ENCODE measurements at regions of chr17 and their contacts with region 1.

Region 1: GRCh38 chr17:61444831-61445230 is 7.4 kb upstream of the TBX4 start:
- DNase-seq: no peak
- ATAC-seq: no peak
- H3K4me3 ChIP-seq: no peak overlapping the region
- H3K27ac ChIP-seq: no peak overlapping the region
- H3K4me1 ChIP-seq: no peaks in the 10 kb centered on the region
- H3K27me3 ChIP-seq: peaks cover 0 to 55% (median 13%) of the 10 kb centered on the region in 9 donors
- CTCF ChIP-seq: no peak
- POLR2A ChIP-seq: no peak

Region 2: GRCh38 chr17:61490540-61491412 is 45.9 kb after region 1 on chr17:
- intact Hi-C with region 1: no loop called
- DNase-seq: no peak
- ATAC-seq: no peak
- H3K4me3 ChIP-seq: no peak overlapping the region
- H3K27ac ChIP-seq: no peak overlapping the region
- H3K4me1 ChIP-seq: no peaks in the 10 kb centered on the region
- H3K27me3 ChIP-seq: peaks cover 0 to 7% (median 0%) of the 10 kb centered on the region in 9 donors
- CTCF ChIP-seq: no peak
- POLR2A ChIP-seq: no peak

Region 3: GRCh38 chr17:61504697-61505349 is 60.0 kb after region 1 on chr17:
- intact Hi-C with region 1: loop called in 1 of 10 experiments (anchors 10 kb)
- DNase-seq: no peak
- ATAC-seq: no peak
- H3K4me3 ChIP-seq: no peak overlapping the region
- H3K27ac ChIP-seq: no peak overlapping the region
- H3K4me1 ChIP-seq: no peaks in the 10 kb centered on the region
- H3K27me3 ChIP-seq: peaks cover 0 to 33% (median 0%) of the 10 kb centered on the region in 9 donors
- CTCF ChIP-seq: no peak
- POLR2A ChIP-seq: no peak

Region 4: DNA sequence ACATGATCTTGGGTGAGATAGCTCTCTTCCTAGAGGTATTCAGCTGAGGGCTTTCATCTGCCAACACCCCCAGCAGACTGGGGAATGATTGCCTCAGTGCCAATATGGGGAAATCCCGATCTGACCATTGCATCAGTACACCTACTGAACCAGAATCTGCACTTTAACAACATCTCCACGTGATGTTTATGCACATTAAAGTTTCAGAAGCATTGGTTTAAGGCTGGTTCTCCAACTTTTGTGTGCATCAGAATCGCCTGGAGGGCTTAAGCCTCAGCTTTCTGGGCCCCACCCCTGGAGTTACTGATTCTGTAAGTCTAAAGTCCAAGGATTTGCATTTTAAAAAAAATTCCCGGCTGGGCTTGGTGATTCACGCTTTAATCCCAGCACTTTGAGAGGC is 743.9 kb after region 1 on chr17:
- intact Hi-C with region 1: no loop called
- DNase-seq: no peak
- ATAC-seq: no peak
- H3K4me3 ChIP-seq: no peak overlapping the region
- H3K27ac ChIP-seq: no peak overlapping the region
- H3K4me1 ChIP-seq: no peaks in the 10 kb centered on the region
- H3K27me3 ChIP-seq: peaks cover 0 to 6% (median 0%) of the 10 kb centered on the region in 9 donors
- CTCF ChIP-seq: no peak
- POLR2A ChIP-seq: no peak

Measured in heart left ventricle (tissue), 16 donors.